Activated CD4-positive, alpha-beta memory T cell treated with anti-CD3 and anti-CD28 coated beads, Interleukin-2, amount 10 ng/mL, durations not matched to agents 7 days and 5 days (primary cell): ENCODE measurements at regions of chr15 and their contacts with region 1.

Region 1: DNA sequence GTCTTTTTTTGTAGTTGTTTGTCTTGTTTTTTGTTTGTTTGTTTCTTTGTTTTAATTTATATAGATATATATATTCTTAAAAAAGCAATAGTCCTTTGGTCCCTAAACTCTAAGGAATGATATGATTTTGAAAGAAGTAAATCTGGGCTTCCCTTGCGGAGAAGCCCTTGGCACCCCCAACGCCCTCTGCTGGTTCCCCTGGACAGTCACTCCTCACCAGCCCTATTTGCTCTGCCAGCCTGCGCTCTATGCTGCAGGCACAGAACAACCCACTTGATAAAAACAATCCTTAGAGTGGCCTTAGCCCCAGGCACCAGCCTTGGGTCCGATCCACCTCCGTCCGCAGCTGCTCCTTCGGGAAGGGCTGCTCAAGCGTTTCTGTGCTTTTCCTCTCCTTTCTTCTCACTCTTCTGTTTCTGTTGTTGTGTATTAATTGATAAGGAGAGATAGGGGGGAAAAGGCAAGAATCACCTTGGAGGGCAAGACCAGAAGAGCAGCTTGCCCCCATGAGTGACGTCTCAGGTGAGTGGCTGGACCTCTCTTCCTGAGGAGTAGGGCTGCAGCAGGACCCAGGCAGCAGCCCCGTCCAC is 13.7 kb upstream of the PARP6 start:
- DNase-seq: peak; percentile 44
- H3K4me3 Mint-ChIP-seq: no peak overlapping the region
- H3K27ac Mint-ChIP-seq: no peak overlapping the region
- H3K4me1 Mint-ChIP-seq: no peaks in the 10 kb centered on the region
- H3K27me3 Mint-ChIP-seq: no peaks in the 10 kb centered on the region

Region 2: DNA sequence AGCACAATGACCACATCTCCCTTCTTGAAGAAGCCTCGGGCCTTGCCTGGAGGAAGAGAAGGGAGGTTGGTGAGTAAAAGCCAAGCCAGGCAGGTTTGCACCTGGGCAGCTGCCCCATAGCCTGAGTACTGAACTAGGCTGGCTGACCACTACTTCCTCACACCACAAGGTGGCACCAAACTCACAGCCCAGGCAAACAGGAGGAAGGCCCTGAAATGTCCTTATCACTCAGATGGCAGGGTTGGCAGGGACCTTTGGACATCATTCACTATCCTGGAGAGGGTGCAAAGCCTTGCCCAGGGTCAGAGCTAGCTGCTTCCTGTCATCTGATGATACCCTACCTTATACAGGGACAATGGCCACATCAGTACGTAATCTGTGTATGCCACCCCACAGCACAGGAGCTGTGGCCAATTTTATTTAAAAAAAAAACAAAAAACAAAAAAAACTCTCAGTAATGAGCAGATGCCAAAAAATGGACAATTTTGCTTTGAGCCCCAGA is 86.3 kb before region 1 on chr15:
- CTCF ChIA-PET with region 1: interaction called, 14 read pairs
- POLR2A ChIA-PET with region 1: no interaction called
- DNase-seq: peak; percentile 78
- H3K4me3 Mint-ChIP-seq: no peak overlapping the region
- H3K27ac Mint-ChIP-seq: no peak overlapping the region
- H3K4me1 Mint-ChIP-seq: peaks cover 23% of the 10 kb centered on the region
- H3K27me3 Mint-ChIP-seq: peaks cover 16% of the 10 kb centered on the region

Region 3: DNA sequence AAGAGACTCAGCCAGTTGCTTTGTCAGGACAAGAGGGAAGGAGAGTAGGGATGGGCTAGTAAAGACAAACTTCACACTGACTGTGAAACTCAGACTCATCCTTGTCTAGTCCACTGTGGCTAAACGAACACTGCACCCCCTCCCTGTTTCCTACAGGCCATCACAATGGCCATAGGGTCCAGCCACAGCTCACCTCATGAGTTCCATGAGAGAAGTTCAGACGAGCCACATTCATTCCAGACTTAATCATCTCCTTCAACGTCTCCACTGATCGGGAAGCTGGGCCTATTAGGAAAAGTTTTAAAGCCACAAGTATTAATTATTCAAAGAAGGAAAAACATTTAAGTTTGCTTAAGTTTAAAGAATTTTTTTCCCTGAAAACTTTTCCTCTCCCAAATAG is 68.8 kb before region 1 on chr15:
- CTCF ChIA-PET with region 1: no interaction called
- POLR2A ChIA-PET with region 1: no interaction called
- DNase-seq: no peak
- H3K4me3 Mint-ChIP-seq: no peak overlapping the region
- H3K27ac Mint-ChIP-seq: no peak overlapping the region
- H3K4me1 Mint-ChIP-seq: peaks cover 28% of the 10 kb centered on the region
- H3K27me3 Mint-ChIP-seq: no peaks in the 10 kb centered on the region